ENCODE measurements at regions of chr6 and their contacts with region 1.

Region 1: GRCh38 chr6:36851149-36851614 is 11.9 kb upstream of the CPNE5 start:
- DNase-seq: no peak
- ATAC-seq: peak; percentile 80
- H3K4me3 ChIP-seq: no peak overlapping the region
- H3K27ac ChIP-seq: peak overlapping the region in 1 of 2 donors; percentile 39
- H3K4me1 ChIP-seq: peaks cover 0 to 2% of the 10 kb centered on the region in 2 donors
- H3K27me3 ChIP-seq: no peaks in the 10 kb centered on the region

Region 2: GRCh38 chr6:36623547-36624459 is 227.4 kb before region 1 on chr6:
- intact Hi-C with region 1: loop called (anchors 10 kb)
- DNase-seq: peak; percentile 87 to 94
- ATAC-seq: peak; percentile 75
- H3K4me3 ChIP-seq: no peak overlapping the region
- H3K27ac ChIP-seq: no peak overlapping the region
- H3K4me1 ChIP-seq: peaks cover 0 to 4% of the 10 kb centered on the region in 2 donors
- H3K27me3 ChIP-seq: no peaks in the 10 kb centered on the region

Region 3: GRCh38 chr6:36765594-36766398 is 85.4 kb before region 1 on chr6:
- intact Hi-C with region 1: loop called (anchors 2 to 5 kb)
- DNase-seq: peak; percentile 91 to 93
- ATAC-seq: peak; percentile 92
- H3K4me3 ChIP-seq: no peak overlapping the region
- H3K27ac ChIP-seq: no peak overlapping the region
- H3K4me1 ChIP-seq: no peaks in the 10 kb centered on the region
- H3K27me3 ChIP-seq: no peaks in the 10 kb centered on the region

Region 4: DNA sequence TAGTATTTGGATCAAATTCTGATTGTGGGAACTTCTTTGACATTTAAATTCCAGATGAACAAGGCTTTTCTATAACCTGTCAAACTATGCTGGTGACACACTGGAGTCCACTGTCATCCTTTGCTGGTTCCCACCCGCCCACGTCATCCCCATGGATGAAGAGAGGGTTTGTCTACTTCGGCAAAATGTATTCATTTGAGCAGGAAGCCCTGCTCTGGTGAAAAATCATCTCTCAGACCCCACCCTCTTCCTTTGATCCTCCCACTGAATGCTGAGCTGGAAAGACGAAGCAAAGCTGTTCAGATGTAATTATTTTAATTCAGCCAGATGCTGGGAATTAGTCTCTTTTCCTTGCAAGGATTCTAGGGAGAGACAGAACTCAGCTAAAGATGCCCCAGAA is 62.4 kb before region 1 on chr6:
- intact Hi-C with region 1: loop called in 1 of 2 experiments (anchors 5 kb)
- DNase-seq: no peak
- ATAC-seq: no peak
- H3K4me3 ChIP-seq: no peak overlapping the region
- H3K27ac ChIP-seq: no peak overlapping the region
- H3K4me1 ChIP-seq: no peaks in the 10 kb centered on the region
- H3K27me3 ChIP-seq: no peaks in the 10 kb centered on the region